PC-3 (cell line): ENCODE measurements at regions of chr10 and their contacts with region 1.

Region 1: GRCh38 chr10:35236739-35237138 is 99.6 kb upstream of the CCNY start:
- DNase-seq: peak; percentile 92
- ATAC-seq: peak; percentile 97
- H3K4me3 ChIP-seq: no peak overlapping the region
- H3K27ac ChIP-seq: no peak overlapping the region
- H3K4me1 ChIP-seq: no peaks in the 10 kb centered on the region
- H3K27me3 ChIP-seq: no peaks in the 10 kb centered on the region
- CTCF ChIP-seq: peak; percentile 99

Region 2: GRCh38 chr10:35153716-35154479 is 82.8 kb before region 1 on chr10:
- CTCF ChIA-PET with region 1: no interaction called
- POLR2A ChIA-PET with region 1: interaction called, 13 read pairs
- intact Hi-C with region 1: no loop called
- DNase-seq: no peak
- ATAC-seq: peak; percentile 85
- H3K4me3 ChIP-seq: no peak overlapping the region
- H3K27ac ChIP-seq: no peak overlapping the region
- H3K4me1 ChIP-seq: peaks cover 5% of the 10 kb centered on the region; the same call in 1 of the 2 replicates
- H3K27me3 ChIP-seq: no peaks in the 10 kb centered on the region
- CTCF ChIP-seq: no peak

Region 3: GRCh38 chr10:35259769-35260397 is 23.1 kb after region 1 on chr10:
- CTCF ChIA-PET with region 1: no interaction called
- POLR2A ChIA-PET with region 1: no interaction called
- intact Hi-C with region 1: no loop called
- DNase-seq: peak; percentile 99
- ATAC-seq: peak; percentile 99
- H3K4me3 ChIP-seq: no peak overlapping the region
- H3K27ac ChIP-seq: peak overlapping the region; percentile 17
- H3K4me1 ChIP-seq: peaks cover 10% of the 10 kb centered on the region
- H3K27me3 ChIP-seq: no peaks in the 10 kb centered on the region
- CTCF ChIP-seq: no peak

Region 4: DNA sequence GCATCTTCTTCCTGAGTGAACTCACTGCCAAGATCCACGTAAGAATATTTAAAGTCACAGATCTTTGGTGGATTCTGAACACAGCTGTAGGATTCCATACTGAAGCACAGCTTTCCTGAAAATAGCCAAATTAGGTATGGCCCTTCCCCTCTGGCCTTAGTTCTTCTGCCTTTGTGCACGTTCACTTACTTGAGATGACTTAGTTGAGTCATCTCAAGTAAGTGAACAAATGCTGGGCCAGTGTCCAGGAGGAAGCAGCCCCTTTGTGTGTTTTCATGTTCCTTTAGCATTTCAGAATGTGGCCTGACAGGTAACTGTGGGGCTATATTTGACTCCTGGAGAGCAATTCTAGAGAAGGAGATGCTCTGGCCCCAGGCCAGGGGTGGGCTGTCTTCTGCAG is 151.0 kb after region 1 on chr10:
- CTCF ChIA-PET with region 1: no interaction called
- POLR2A ChIA-PET with region 1: no interaction called
- intact Hi-C with region 1: loop called (anchors 5 kb)
- DNase-seq: peak; percentile 100
- ATAC-seq: peak; percentile 87
- H3K4me3 ChIP-seq: no peak overlapping the region
- H3K27ac ChIP-seq: peak overlapping the region; percentile 3
- H3K4me1 ChIP-seq: peaks cover 42% of the 10 kb centered on the region
- H3K27me3 ChIP-seq: no peaks in the 10 kb centered on the region
- CTCF ChIP-seq: no peak

Region 5: GRCh38 chr10:35546824-35547273 is 310.1 kb after region 1 on chr10:
- CTCF ChIA-PET with region 1: interaction called, 8 read pairs
- POLR2A ChIA-PET with region 1: interaction called, 9 read pairs
- intact Hi-C with region 1: loop called (anchors 1 kb)
- DNase-seq: peak; percentile 100
- ATAC-seq: peak; percentile 93
- H3K4me3 ChIP-seq: peak overlapping the region; percentile 31
- H3K27ac ChIP-seq: peak overlapping the region; percentile 86
- H3K4me1 ChIP-seq: peaks cover 42% of the 10 kb centered on the region
- H3K27me3 ChIP-seq: no peaks in the 10 kb centered on the region
- CTCF ChIP-seq: peak; percentile 78

Region 6: DNA sequence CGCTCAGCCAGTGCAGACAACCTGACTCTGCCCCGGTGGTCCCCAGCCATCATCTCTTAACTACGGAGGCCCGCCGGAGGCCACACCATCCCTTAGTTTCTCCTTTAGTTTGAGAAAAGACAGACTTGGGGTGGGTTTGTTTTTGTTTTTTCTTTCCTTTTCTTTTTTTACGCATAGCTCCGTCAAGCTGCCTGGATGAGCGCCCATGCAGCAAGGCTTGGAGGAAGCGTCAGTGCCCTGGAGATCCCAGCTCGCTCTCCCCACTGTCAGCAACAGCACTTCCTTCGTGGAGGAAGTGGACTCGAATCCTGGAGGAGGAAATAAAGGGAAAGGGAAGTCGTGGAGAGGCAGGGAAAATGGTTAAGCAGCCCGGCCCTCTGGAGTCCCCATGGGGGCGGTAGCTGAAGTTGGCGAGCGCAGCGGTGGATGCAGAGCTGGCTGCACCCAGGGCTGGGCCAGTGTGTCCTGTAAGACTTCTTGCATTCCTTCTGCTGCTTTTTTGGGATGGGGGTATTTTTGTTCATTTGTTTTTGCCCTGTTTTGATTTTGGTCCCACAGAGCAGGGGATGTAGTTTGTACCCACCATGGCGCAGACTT is 332.5 kb after region 1 on chr10:
- CTCF ChIA-PET with region 1: interaction called, 16 read pairs
- POLR2A ChIA-PET with region 1: interaction called, 13 read pairs
- intact Hi-C with region 1: no loop called
- DNase-seq: no peak
- ATAC-seq: no peak
- H3K4me3 ChIP-seq: no peak overlapping the region
- H3K27ac ChIP-seq: no peak overlapping the region
- H3K4me1 ChIP-seq: peaks cover 3% of the 10 kb centered on the region
- H3K27me3 ChIP-seq: no peaks in the 10 kb centered on the region
- CTCF ChIP-seq: no peak

Region 7: GRCh38 chr10:35613597-35614226 is 377.0 kb after region 1 on chr10:
- CTCF ChIA-PET with region 1: no interaction called
- POLR2A ChIA-PET with region 1: no interaction called
- intact Hi-C with region 1: no loop called
- DNase-seq: peak; percentile 92
- ATAC-seq: peak; percentile 96
- H3K4me3 ChIP-seq: no peak overlapping the region
- H3K27ac ChIP-seq: no peak overlapping the region
- H3K4me1 ChIP-seq: peaks cover 8% of the 10 kb centered on the region
- H3K27me3 ChIP-seq: no peaks in the 10 kb centered on the region
- CTCF ChIP-seq: peak; percentile 100

Region 8: GRCh38 chr10:36880898-36881297 is 1644.2 kb after region 1 on chr10:
- CTCF ChIA-PET with region 1: interaction called, 5 read pairs
- POLR2A ChIA-PET with region 1: no interaction called
- intact Hi-C with region 1: loop called (anchors 2 kb)
- DNase-seq: peak; percentile 93
- ATAC-seq: peak; percentile 86
- H3K4me3 ChIP-seq: no peak overlapping the region
- H3K27ac ChIP-seq: no peak overlapping the region
- H3K4me1 ChIP-seq: no peaks in the 10 kb centered on the region
- H3K27me3 ChIP-seq: 0 out of 2 replicates have a peak, but pooled peaks cover 3% of the 10 kb centered on the region
- CTCF ChIP-seq: peak; percentile 86